Mammary epithelial cell (primary cell): ENCODE measurements at regions of chr2 and their contacts with region 1.

Region 1: DNA sequence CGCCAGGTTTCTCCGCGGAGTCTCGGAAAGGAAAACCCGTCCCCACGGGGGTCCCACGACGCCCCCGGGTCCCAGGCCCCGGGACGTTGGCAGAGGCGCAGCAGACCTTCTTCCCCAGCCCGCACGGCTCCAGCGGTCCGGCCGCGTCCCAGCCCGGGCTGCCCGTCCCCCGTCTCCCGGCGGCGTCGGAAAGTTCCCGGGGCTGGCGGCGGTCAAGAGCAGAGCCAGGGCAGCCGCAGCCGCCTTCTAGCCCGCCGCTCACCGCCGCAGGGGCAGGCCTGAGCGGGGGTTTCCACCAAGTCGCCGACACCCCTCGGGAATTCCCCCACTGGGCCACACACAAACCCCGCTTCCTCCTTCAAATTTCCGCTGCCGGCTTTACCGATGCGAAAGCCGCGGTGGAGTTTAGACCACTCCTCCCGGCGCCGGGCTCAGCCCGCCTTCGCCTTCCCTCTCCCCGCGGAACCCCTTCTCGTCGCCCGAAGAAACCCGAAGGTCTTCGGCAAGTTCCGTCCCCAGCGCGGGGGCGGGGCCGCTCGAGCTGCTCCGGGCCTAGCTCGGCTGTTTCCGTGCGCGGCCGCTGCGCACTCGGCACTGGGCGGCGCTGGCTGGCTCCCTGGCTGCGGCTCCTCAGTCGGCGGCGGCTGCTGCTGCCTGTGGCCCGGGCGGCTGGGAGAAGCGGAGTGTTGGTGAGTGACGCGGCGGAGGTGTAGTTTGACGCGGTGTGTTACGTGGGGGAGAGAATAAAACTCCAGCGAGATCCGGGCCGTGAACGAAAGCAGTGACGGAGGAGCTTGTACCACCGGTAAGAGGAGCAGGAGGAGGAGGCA is at the start of gene CREB1:
- DNase-seq: peak; percentile 99
- H3K4me3 ChIP-seq: peak within 1 kb of the TSS; percentile 88 to 94 (median 89)
- H3K27ac ChIP-seq: peak within 1 kb of the TSS; percentile 99
- H3K4me1 ChIP-seq: peaks cover 19% of the 10 kb centered on the region
- H3K27me3 ChIP-seq: no peaks in the 10 kb centered on the region
- CTCF ChIP-seq: no peak
- total RNA-seq, gene CREB1: 42.3 to 75.5 TPM

Region 2: GRCh38 chr2:207487650-207488311 is 41.8 kb before region 1 on chr2:
- CTCF ChIA-PET with region 1: interaction called, 23 read pairs
- dilution Hi-C with region 1: no loop called
- in situ Hi-C with region 1: loop called in 1 of 2 experiments (anchors 5 kb)
- intact Hi-C with region 1: loop called (anchors 1 kb)
- DNase-seq: peak; percentile 82
- H3K4me3 ChIP-seq: no peak overlapping the region
- H3K27ac ChIP-seq: no peak overlapping the region
- H3K4me1 ChIP-seq: peaks cover 16% of the 10 kb centered on the region
- H3K27me3 ChIP-seq: no peaks in the 10 kb centered on the region
- CTCF ChIP-seq: peak; percentile 28 to 43

Region 3: DNA sequence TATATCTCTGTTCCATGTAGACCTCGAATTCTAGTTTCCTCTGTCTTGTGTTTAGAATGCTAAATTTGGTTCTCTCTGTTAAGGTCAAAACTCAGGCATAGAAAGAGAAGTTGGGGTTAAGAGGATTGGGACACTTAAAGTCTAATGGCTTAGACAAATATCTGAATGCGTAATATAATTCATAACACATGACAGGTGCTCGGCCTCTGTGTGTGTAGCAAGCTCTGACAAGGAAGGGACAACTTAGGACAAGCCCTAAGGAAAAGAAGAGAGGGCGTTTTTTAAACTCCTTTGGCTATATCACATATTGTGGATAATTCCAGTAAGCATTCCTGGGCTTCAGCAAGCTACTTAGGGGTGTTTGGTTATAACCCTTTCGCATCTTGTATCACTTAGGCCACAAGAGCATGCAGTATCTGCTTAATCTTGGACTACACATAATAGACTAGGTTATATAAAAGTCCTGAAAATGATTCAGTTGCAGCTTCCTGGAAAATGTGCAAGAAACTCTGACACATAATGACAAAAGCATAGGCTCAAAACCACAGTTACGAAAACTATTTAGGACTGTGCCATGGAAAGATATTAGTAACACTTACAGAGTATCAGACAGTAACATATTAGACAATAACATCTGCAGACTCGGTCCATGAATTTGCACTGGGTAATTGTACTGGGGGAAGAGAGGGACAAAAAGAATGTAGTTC is 15.8 kb before region 1 on chr2:
- CTCF ChIA-PET with region 1: no interaction called
- dilution Hi-C with region 1: no loop called
- in situ Hi-C with region 1: no loop called
- intact Hi-C with region 1: loop called (anchors 1 kb)
- DNase-seq: peak; percentile 96
- H3K4me3 ChIP-seq: no peak overlapping the region
- H3K27ac ChIP-seq: peak overlapping the region; percentile 94
- H3K4me1 ChIP-seq: peaks cover 46% of the 10 kb centered on the region
- H3K27me3 ChIP-seq: no peaks in the 10 kb centered on the region
- CTCF ChIP-seq: no peak

Region 4: GRCh38 chr2:207710814-207711740 is 181.5 kb after region 1 on chr2 and contains the start of gene CCNYL1:
- CTCF ChIA-PET with region 1: no interaction called
- dilution Hi-C with region 1: no loop called
- in situ Hi-C with region 1: no loop called
- intact Hi-C with region 1: loop called (anchors 2 kb)
- DNase-seq: peak; percentile 99
- H3K4me3 ChIP-seq: peak within 1 kb of the TSS; percentile 88 to 93 (median 91)
- H3K27ac ChIP-seq: peak within 1 kb of the TSS; percentile 73
- H3K4me1 ChIP-seq: peaks cover 27% of the 10 kb centered on the region
- H3K27me3 ChIP-seq: no peaks in the 10 kb centered on the region
- CTCF ChIP-seq: peak in 1 of 2 donors; percentile 13
- total RNA-seq, gene CCNYL1: 11.2 to 30.0 TPM

Region 5: DNA sequence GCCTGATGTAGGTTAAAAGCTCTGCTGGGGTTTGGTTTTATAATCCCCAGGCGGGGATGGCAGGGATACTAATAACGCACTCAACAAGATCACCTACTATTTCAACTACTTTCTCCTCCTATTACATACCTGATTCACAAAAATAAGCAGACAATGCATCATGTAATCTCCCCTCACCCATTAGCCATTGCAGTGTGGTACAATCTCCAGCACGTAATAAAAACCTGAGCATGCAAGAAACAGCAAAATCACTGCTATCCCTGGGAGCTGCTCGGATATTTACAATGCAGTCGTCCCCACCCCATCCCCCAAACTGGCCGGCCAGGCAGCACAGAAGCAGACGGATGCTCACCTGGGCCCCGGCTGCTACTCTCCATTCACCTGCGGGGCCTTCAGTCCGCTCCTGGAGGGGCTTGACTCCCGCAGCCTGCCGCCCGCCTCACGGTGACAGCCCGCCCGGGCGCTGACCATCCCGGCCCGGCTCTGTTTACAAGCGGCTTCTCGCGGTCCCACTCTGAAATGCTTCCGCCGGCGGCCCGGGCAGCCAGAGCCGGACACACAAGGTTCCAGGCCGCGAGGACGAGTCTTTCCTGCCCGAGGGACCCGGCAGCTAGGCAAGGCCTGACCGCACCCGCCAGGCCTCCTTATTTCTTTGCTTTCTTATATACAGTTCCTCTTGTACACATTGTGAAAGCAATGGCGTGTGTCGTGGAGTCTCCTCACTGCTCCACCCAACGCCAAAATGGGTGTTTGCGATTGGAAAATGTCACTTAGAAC is 495.7 kb after region 1 on chr2 and contains the start of gene PLEKHM3:
- CTCF ChIA-PET with region 1: no interaction called
- dilution Hi-C with region 1: no loop called
- in situ Hi-C with region 1: no loop called
- intact Hi-C with region 1: no loop called
- DNase-seq: peak; percentile 81
- H3K4me3 ChIP-seq: peak within 1 kb of the TSS; percentile 63 to 87 (median 84)
- H3K27ac ChIP-seq: peak within 1 kb of the TSS; percentile 71
- H3K4me1 ChIP-seq: peaks cover 7% of the 10 kb centered on the region
- H3K27me3 ChIP-seq: no peaks in the 10 kb centered on the region
- CTCF ChIP-seq: no peak
- total RNA-seq, gene PLEKHM3: 6.4 to 15.0 TPM